Mammary epithelial cell (primary cell): ENCODE measurements at regions of chr12 and their contacts with region 1.

Region 1: DNA sequence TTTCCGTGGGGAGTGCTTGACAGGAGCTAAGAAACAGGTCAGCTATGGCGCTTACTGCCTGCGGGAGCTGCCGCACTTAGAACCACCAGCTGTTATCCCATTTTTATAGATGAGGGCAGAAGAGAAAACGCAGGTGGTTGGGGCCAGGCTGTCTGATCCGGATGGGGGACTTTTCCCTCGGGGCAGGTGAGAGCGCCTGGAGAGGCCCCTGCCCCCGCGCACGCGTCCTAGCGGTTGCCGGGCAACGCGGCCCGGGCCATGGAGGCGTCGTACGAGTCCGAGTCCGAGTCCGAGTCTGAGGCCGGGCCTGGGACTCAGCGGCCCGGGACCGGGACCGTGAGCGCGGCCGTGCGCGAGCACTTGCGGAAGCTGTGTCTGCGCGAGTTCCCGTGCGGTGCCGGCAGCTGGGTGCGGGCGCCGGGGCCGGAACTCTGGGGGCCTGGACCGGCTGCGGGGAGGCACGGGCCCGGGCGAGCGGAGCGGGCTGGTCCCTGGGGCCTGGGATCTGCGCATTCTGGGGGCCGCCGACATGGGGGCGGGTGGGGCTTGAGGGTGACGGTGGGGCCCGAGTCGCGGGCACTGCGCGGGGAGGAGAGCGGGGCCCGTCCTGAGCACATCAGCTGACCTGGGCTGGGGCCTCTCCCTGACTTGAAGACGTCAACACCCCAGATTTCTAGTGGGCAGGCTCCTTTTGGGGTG is at the start of gene LRRC43:
- DNase-seq: peak; percentile 17
- H3K4me3 ChIP-seq: peak within 1 kb of the TSS in 2 of 3 experiments; percentile 38 to 45
- H3K27ac ChIP-seq: no peak within 1 kb of the TSS
- H3K4me1 ChIP-seq: peaks cover 8% of the 10 kb centered on the region
- H3K27me3 ChIP-seq: no peaks in the 10 kb centered on the region
- CTCF ChIP-seq: no peak
- total RNA-seq, gene LRRC43: 0.50 to 0.66 TPM

Region 2: DNA sequence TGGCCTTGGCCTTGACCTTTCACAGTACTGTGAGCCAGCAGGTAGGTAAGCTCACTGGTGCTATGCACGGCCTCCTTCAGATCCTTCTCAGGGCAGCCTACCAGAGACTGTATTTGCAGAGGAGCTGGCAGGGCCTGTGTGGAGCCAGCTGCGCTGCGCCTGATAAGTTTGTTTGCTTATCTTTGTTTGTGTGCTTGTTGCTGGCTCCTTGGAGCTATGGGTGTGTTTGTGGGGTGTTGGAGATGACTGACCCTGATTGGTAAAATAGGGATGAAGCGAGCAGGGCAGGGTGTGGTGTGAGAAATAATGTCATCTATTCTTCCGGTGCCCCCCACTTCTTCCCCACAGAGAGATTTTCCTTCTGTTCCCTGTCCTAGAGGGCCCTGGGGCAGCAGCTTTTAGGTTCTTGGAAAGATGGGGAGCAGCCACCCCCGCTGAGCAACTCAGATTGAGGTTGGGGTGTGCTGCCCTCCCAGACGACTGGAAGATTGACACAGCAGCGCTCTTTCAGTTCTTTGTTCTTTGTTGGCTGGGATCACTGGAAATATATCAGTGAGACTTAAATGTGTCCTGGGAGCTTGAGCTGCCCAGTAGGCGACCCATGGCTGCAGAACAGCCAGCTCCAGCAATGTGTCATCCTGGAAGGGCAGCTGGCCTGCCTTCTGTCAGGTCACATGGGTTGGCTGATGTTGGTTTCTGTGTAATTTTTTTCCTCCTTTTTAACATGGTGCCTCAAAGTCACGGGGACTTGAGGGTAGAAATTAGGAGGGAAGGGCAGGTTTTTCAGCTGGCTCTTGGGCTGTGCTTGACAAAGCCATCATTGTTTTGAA is 84.9 kb before region 1 on chr12:
- CTCF ChIA-PET with region 1: no interaction called
- dilution Hi-C with region 1: no loop called
- in situ Hi-C with region 1: no loop called
- intact Hi-C with region 1: no loop called
- DNase-seq: peak; percentile 64
- H3K4me3 ChIP-seq: no peak overlapping the region
- H3K27ac ChIP-seq: peak overlapping the region; percentile 85
- H3K4me1 ChIP-seq: peaks cover 53% of the 10 kb centered on the region
- H3K27me3 ChIP-seq: no peaks in the 10 kb centered on the region
- CTCF ChIP-seq: no peak

Region 3: GRCh38 chr12:122116707-122117535 is 66.1 kb before region 1 on chr12:
- CTCF ChIA-PET with region 1: no interaction called
- dilution Hi-C with region 1: loop called (anchors 5 kb)
- in situ Hi-C with region 1: no loop called
- intact Hi-C with region 1: no loop called
- DNase-seq: no peak
- H3K4me3 ChIP-seq: no peak overlapping the region
- H3K27ac ChIP-seq: no peak overlapping the region
- H3K4me1 ChIP-seq: peaks cover 23% of the 10 kb centered on the region
- H3K27me3 ChIP-seq: no peaks in the 10 kb centered on the region
- CTCF ChIP-seq: peak; percentile 21 to 27

Region 4: DNA sequence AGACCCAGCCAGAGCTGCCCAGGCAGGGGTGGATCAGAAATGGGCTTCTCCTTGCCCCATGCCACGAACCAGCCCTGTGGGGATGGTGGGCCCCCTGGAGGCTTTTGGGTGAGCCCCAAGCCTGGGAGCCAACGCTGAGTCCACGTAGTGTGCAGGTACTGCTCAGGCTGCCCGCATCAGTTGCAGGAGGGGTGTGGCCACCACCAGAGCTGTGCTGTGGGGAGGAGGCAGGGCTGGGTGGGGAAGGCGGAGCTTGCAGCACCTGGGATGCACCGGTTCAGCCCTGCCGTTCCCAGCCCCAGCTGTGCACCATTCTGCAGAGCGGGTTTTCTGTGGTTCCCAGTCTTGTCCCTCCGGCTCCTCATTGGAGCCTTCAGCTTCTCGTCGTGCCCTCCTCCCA is 45.4 kb before region 1 on chr12:
- CTCF ChIA-PET with region 1: interaction called, 3 read pairs
- dilution Hi-C with region 1: no loop called
- in situ Hi-C with region 1: loop called in 1 of 2 experiments (anchors 10 kb)
- intact Hi-C with region 1: no loop called
- DNase-seq: peak; percentile 77
- H3K4me3 ChIP-seq: peak overlapping the region in 1 of 3 experiments; percentile 2
- H3K27ac ChIP-seq: no peak overlapping the region
- H3K4me1 ChIP-seq: peaks cover 15% of the 10 kb centered on the region
- H3K27me3 ChIP-seq: no peaks in the 10 kb centered on the region
- CTCF ChIP-seq: no peak

Region 5: DNA sequence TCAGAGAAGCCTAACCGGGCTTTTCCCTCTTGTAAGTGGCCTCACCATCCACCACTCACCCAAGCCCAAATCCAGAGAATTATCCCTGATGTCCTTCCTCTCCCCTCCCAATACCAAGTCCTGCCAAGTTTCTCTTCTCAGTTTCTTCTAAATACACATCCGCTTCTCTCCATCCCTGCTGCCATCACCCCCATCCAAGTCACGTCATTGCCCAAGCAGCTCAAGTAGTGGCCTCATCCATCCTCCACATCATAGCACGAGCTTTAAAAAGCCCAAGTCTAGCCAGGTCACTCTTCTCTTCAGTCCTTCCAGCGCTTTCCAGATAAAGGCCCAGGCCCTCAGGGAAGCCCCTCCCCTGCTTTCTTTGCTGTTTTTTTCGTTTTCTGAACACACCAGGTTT is 34.4 kb before region 1 on chr12:
- CTCF ChIA-PET with region 1: no interaction called
- dilution Hi-C with region 1: loop called (anchors 5 kb)
- in situ Hi-C with region 1: no loop called
- intact Hi-C with region 1: no loop called
- DNase-seq: no peak
- H3K4me3 ChIP-seq: no peak overlapping the region
- H3K27ac ChIP-seq: no peak overlapping the region
- H3K4me1 ChIP-seq: no peaks in the 10 kb centered on the region
- H3K27me3 ChIP-seq: no peaks in the 10 kb centered on the region
- CTCF ChIP-seq: no peak

Region 6: DNA sequence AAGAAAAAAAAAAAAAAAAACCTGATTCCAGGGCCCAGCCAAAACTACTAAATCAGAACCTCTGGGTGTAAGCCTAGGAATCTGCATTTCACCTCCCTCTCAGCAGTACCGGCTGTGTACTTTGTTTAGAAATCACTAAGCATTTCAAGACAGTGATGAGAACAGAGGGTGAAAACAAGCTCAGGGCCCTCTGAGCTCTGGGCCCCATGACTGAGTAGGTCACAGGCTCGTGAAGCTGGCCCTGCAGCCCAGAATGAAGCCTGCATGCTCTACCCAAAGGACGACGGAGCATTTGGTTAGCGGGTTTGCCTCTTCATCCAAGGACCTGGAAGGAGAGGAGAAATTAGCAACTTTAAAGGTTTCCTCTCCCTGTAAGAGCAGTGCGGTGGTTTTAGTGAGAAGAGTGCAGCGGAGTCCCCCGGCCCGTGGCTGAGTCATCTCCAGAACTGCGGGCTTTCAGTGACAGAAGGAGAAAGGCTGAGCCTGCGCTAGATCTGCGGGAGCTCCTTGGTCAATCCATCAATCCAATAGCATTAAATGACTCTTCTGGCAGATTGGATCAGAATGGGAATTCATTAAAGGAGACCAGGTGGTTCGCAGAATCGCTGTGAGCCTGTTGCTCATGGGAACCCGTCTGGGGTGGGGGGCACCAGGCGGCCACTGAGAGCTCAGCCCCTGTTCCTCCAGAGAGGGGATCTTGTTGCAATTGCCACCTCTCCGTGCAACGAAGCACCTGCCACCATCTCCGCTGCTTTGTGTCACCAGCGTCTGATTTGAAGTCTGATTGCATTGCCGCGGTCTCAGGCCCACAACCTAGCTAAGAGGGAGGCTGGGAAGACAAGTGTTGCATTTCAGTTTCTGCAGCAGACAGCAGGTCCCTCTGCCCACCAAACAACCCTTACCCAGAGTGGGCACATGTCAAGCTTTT is 16.4 kb before region 1 on chr12:
- CTCF ChIA-PET with region 1: no interaction called
- dilution Hi-C with region 1: no loop called
- in situ Hi-C with region 1: no loop called
- intact Hi-C with region 1: loop called (anchors 1 kb)
- DNase-seq: no peak
- H3K4me3 ChIP-seq: no peak overlapping the region
- H3K27ac ChIP-seq: no peak overlapping the region
- H3K4me1 ChIP-seq: no peaks in the 10 kb centered on the region
- H3K27me3 ChIP-seq: no peaks in the 10 kb centered on the region
- CTCF ChIP-seq: no peak

Region 7: GRCh38 chr12:122225683-122226407 is 42.8 kb after region 1 on chr12 and contains the start of gene DIABLO:
- CTCF ChIA-PET with region 1: no interaction called
- dilution Hi-C with region 1: loop called (anchors 5 kb)
- in situ Hi-C with region 1: no loop called
- intact Hi-C with region 1: no loop called
- DNase-seq: peak; percentile 100
- H3K4me3 ChIP-seq: peak within 1 kb of the TSS; percentile 67 to 99 (median 97)
- H3K27ac ChIP-seq: peak within 1 kb of the TSS; percentile 95
- H3K4me1 ChIP-seq: peaks cover 21% of the 10 kb centered on the region
- H3K27me3 ChIP-seq: no peaks in the 10 kb centered on the region
- CTCF ChIP-seq: no peak
- total RNA-seq, gene DIABLO: 54.5 to 55.0 TPM

Region 8: DNA sequence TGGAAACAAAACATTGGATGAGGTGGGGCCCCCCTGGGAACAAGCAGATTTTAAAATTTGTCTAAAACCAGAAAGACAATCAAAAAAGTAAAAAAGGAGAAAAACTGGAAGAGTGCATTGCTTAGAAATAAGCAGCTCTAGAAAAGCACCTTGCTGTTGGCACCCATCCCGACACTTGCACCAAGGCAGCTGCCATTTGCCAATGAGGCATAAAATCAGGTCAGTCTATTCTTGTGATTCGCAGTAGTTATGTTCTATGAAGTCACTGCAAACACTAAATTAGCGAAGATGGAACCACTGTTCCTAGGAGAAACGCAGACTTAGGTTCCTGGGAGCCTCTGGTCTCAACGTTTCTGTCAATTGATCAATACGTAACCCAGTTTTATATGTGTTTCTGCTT is 67.0 kb after region 1 on chr12:
- CTCF ChIA-PET with region 1: no interaction called
- dilution Hi-C with region 1: loop called (anchors 5 kb)
- in situ Hi-C with region 1: no loop called
- intact Hi-C with region 1: no loop called
- DNase-seq: no peak
- H3K4me3 ChIP-seq: no peak overlapping the region
- H3K27ac ChIP-seq: no peak overlapping the region
- H3K4me1 ChIP-seq: no peaks in the 10 kb centered on the region
- H3K27me3 ChIP-seq: no peaks in the 10 kb centered on the region
- CTCF ChIP-seq: no peak